ENCODE measurements at regions of chr17 and their contacts with region 1.

Region 1: GRCh38 chr17:3738562-3739295 is 15.0 kb downstream of the HASPIN start:
- DNase-seq: no peak
- ATAC-seq: peak; percentile 71
- H3K4me3 ChIP-seq: no peak overlapping the region
- H3K27ac ChIP-seq: no peak overlapping the region
- H3K4me1 ChIP-seq: peaks cover 2 to 21% of the 10 kb centered on the region in 2 experiments; a peak in 3 of 4 replicates
- H3K27me3 ChIP-seq: no peaks in the 10 kb centered on the region
- CTCF ChIP-seq: no peak
- POLR2A ChIP-seq: no peak
- RAD21 ChIP-seq: no peak

Region 2: DNA sequence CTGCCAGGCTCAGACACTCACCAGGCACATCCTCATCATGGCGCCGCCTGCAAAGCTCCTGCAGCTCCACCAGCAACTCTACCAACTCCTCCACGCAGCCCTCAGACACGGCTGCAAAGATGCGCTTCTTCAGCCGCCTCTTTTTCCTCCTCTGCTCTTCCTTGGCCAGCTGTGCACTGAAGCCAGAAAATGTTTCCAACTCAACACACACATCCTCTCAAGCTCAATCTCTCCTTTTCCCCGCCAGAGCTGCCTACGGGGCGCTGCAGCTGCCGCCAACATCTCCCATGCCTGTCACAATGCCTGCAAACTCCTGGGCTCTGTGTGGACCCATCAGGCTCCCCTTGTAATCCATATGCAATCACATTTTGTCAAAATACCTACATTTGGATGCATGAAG is 195.3 kb before region 1 on chr17:
- CTCF ChIA-PET with region 1: no interaction called
- POLR2A ChIA-PET with region 1: no interaction called
- RAD21 ChIA-PET with region 1: no interaction called
- intact Hi-C with region 1: no loop called
- DNase-seq: no peak
- ATAC-seq: no peak
- H3K4me3 ChIP-seq: no peak overlapping the region
- H3K27ac ChIP-seq: no peak overlapping the region
- H3K4me1 ChIP-seq: no peaks in the 10 kb centered on the region
- H3K27me3 ChIP-seq: no peaks in the 10 kb centered on the region
- CTCF ChIP-seq: no peak
- POLR2A ChIP-seq: no peak
- RAD21 ChIP-seq: no peak

Region 3: GRCh38 chr17:3723556-3724369 is 15.0 kb before region 1 on chr17 and contains the start of gene HASPIN:
- CTCF ChIA-PET with region 1: interaction called, 17 read pairs
- POLR2A ChIA-PET with region 1: no interaction called
- RAD21 ChIA-PET with region 1: no interaction called
- intact Hi-C with region 1: no loop called
- DNase-seq: peak; percentile 74
- ATAC-seq: peak; percentile 90
- H3K4me3 ChIP-seq: peak within 1 kb of the TSS; percentile 93 to 96
- H3K27ac ChIP-seq: peak within 1 kb of the TSS; percentile 70
- H3K4me1 ChIP-seq: peaks cover 8 to 37% of the 10 kb centered on the region in 2 experiments
- H3K27me3 ChIP-seq: no peaks in the 10 kb centered on the region
- CTCF ChIP-seq: peak in 1 of 3 experiments; percentile 32; a peak in 2 of 6 replicates
- POLR2A ChIP-seq: peak; percentile 75
- RAD21 ChIP-seq: no peak
- total RNA-seq, gene HASPIN: 19.6 TPM

Region 4: DNA sequence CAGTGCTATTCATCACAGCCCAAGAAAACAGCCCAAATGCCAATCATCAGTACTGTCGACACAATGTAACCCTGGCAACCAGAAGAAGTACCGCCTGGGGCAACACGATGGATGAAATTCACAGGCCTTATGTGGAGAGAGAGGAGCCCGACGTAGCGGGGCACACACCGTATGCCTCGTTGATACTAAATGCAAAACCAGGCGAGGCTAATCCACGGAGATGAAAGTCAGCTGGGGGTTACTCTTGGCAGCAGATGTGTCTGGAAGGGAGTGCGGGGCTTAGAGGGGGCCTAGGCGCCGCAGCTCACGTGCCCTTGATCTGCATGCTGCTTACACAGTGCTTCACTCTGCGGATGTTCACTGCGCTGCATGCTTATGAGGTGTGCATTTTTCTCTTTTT is 32.4 kb after region 1 on chr17:
- CTCF ChIA-PET with region 1: interaction called, 12 read pairs
- POLR2A ChIA-PET with region 1: no interaction called
- RAD21 ChIA-PET with region 1: no interaction called
- intact Hi-C with region 1: no loop called
- DNase-seq: no peak
- ATAC-seq: no peak
- H3K4me3 ChIP-seq: no peak overlapping the region
- H3K27ac ChIP-seq: no peak overlapping the region
- H3K4me1 ChIP-seq: peaks cover 0 to 18% of the 10 kb centered on the region in 2 experiments; a peak in 2 of 4 replicates
- H3K27me3 ChIP-seq: no peaks in the 10 kb centered on the region
- CTCF ChIP-seq: no peak
- POLR2A ChIP-seq: no peak
- RAD21 ChIP-seq: no peak

Region 5: DNA sequence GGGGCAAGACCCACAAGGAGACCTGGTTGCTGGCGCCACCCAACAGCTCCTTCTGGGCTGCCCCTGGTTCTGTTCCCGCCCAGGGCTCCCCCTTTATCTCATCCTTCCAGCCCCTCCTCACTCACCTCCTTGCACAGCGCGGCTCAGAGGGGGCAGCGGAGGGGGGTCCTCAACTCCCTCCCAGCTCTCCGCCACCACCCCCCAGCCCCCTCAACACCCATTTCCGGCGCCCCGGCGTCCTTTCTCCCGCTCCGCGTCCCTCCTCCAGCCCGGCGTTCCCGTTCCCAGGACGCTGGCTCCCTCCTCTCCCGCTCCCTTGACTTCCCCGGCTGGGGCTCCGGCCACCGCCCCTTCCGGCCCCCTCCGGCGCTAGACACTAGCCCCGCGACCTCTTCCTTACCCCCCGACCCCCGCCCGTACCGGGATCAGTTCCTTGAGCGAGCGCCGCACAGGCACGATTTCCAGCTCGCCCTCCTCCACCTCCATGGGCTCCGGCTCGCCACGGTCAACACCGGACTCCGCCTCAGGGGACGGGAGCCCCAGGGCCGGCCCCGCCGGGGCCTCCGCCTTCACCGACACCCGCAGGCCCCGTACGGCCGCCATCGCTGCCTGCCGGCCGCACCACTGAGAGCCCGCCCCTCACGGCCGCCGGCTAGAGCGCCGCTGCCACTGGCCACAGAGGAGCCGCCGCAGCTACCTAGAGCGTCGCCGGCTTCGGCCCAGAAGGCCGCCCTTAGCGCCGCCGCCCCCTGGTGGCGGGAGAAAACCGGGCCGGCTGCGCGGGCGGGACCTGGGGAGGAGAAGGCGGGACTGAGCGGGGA is 107.1 kb after region 1 on chr17 and contains the start of gene NCBP3:
- CTCF ChIA-PET with region 1: interaction called, 73 read pairs
- POLR2A ChIA-PET with region 1: interaction called, 6 read pairs
- RAD21 ChIA-PET with region 1: interaction called, 3 to 8 read pairs
- intact Hi-C with region 1: loop called (anchors 1 kb)
- DNase-seq: peak; percentile 85
- ATAC-seq: peak; percentile 96
- H3K4me3 ChIP-seq: peak within 1 kb of the TSS; percentile 84 to 91
- H3K27ac ChIP-seq: peak within 1 kb of the TSS; percentile 81
- H3K4me1 ChIP-seq: peaks cover 5 to 20% of the 10 kb centered on the region in 2 experiments; a peak in 3 of 4 replicates
- H3K27me3 ChIP-seq: no peaks in the 10 kb centered on the region
- CTCF ChIP-seq: peak; percentile 73 to 94 (median 81); a peak in 5 of 6 replicates
- POLR2A ChIP-seq: peak; percentile 65
- RAD21 ChIP-seq: no peak
- total RNA-seq, gene NCBP3: 46.5 TPM

Region 6: DNA sequence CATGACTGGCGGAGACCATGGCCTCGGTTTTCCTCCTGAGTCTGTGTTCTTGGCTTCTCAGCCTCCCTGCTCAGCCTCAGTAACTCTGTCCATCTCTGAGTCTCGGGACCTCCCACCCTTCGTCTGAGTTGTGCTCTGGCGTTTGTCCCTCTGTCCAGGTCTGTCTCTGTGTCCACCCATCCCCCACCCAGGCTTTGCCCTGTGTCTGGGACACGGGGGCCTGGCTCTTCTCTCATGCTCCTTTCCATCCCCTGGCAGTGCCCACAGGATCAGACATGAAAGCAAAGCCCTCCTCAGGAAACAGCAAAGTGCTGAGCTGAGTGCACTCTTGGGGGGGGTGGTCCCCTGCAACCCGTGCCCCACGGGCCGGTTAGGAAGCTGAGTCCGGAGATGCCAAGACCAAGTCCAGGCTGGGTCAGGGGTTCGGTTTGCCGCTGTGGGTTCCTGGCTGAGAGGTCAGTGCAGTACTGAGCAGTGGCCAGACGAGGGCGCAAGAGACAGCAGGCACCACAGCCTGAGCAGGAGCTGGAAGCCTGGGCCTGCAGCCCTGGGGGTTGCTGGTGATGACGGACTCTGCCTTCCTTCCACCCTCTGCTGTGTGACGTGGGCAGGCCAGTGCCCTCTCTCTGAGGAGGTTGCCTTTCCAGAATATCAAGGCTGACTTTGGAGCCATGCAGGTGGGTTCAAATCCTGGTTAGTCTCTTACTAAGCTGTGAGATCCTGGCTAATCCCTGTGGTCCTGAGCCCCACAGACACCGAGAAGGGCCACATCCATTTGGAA is 175.0 kb after region 1 on chr17:
- CTCF ChIA-PET with region 1: interaction called, 18 read pairs
- POLR2A ChIA-PET with region 1: interaction called, 4 read pairs
- RAD21 ChIA-PET with region 1: interaction called in 1 of 2 experiments, 5 read pairs
- intact Hi-C with region 1: loop called (anchors 5 kb)
- DNase-seq: peak; percentile 54
- ATAC-seq: peak; percentile 95
- H3K4me3 ChIP-seq: no peak overlapping the region
- H3K27ac ChIP-seq: no peak overlapping the region
- H3K4me1 ChIP-seq: peaks cover 0 to 8% of the 10 kb centered on the region in 2 experiments; a peak in 2 of 4 replicates
- H3K27me3 ChIP-seq: no peaks in the 10 kb centered on the region
- CTCF ChIP-seq: peak; percentile 78 to 98 (median 96)
- POLR2A ChIP-seq: no peak
- RAD21 ChIP-seq: peak; percentile 91

Region 7: DNA sequence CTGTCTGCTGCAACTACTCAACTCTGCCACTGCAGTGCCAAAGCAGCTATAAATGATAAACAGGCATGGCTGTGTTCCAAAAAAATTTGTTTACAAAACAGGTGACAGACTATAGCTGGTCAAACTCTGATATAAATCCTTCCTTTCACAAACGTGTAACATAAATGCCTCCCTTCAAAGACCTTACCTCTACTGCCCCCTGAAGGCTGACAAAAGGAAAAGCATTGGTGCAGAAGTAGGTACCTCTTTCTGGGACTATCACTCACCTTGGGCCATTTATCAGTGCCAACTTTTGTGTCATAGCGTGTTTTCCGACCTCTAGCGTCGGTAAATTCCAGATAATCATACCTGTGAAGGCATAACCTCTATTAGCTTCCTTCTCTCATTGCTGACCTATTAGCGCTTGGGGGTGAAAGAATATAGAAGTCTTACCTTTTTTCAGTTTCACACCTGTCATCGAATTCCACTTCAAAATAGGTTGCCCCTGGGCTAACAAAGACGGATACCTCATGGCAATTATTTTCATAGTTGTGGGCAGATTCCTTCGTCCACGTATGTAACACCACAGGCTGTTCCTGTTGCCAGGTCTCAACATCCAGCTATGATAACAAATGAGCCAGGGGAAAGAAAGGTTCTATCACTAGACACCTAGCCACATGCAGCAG is 336.2 kb after region 1 on chr17:
- CTCF ChIA-PET with region 1: no interaction called
- POLR2A ChIA-PET with region 1: no interaction called
- RAD21 ChIA-PET with region 1: no interaction called
- intact Hi-C with region 1: loop called (anchors 10 kb)
- DNase-seq: peak; percentile 27
- ATAC-seq: peak; percentile 90
- H3K4me3 ChIP-seq: no peak overlapping the region
- H3K27ac ChIP-seq: no peak overlapping the region
- H3K4me1 ChIP-seq: no peaks in the 10 kb centered on the region
- H3K27me3 ChIP-seq: no peaks in the 10 kb centered on the region
- CTCF ChIP-seq: peak; percentile 53 to 78 (median 74); a peak in 5 of 6 replicates
- POLR2A ChIP-seq: no peak
- RAD21 ChIP-seq: peak; percentile 64

Measured in HCT116 (cell line).